Heart left ventricle (tissue), 16 donors: ENCODE measurements at regions of chr6 and their contacts with region 1.

Region 1: GRCh38 chr6:36302227-36302976 is 32.5 kb downstream of the PNPLA1 start:
- DNase-seq: peak; percentile 75 to 89 (median 85)
- ATAC-seq: peak; percentile 61 to 92 (median 88)
- H3K4me3 ChIP-seq: no peak overlapping the region
- H3K27ac ChIP-seq: no peak overlapping the region
- H3K4me1 ChIP-seq: peaks cover 0 to 5% (median 0%) of the 10 kb centered on the region in 12 donors
- H3K27me3 ChIP-seq: peaks cover 0 to 21% (median 0%) of the 10 kb centered on the region in 9 donors
- CTCF ChIP-seq: peak; percentile 80 to 95 (median 90)
- POLR2A ChIP-seq: no peak

Region 2: DNA sequence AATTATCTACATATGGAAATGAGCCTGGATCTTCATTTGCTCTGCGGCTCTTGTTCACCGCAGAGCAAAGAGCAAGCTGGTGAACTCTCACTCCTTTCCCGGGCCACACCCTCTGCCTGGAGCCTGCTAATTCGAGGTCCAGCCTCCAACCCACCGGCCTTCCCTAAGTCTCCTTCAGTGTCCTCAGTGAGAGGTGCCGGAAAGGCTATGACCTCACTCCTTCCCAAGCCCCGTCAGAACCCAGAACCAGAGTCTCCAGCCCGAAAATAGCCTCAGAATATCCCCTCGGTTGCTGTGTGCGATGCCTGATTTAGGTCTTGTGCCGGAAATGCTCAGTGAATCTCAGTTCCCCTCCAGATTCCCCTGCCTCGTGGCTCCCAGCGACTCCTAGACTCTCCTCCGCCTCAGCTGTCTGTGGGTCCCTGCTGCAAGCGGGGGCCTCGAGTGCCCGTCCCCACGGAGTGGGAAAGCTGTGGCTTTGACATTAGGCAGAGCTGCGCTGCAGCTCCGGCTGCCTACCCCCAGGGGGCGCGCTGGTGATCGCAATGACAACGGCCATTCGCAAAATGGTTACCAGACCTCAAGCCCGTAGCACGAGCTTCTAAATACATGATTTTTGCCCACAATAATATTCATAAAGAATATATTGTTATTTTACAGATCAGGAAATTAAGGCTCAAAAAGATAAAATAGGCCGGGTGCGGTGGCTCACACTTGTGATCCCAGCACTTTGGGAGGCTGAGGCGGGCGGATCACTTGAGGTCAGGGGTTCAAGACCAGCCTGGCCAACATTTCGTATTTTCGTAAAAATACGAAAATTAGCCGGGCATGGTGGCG is 38.4 kb after region 1 on chr6:
- intact Hi-C with region 1: loop called in 1 of 10 experiments (anchors 5 kb)
- DNase-seq: peak; percentile 64 to 92 (median 77)
- ATAC-seq: peak; percentile 44 to 83 (median 80)
- H3K4me3 ChIP-seq: peak overlapping the region in 7 of 12 donors; percentile 3 to 41 (median 24)
- H3K27ac ChIP-seq: peak overlapping the region in 1 of 12 donors; percentile 10
- H3K4me1 ChIP-seq: peaks cover 0 to 12% (median 5%) of the 10 kb centered on the region in 12 donors
- H3K27me3 ChIP-seq: peaks cover 0 to 20% (median 7%) of the 10 kb centered on the region in 9 donors
- CTCF ChIP-seq: peak; percentile 90 to 98 (median 97)
- POLR2A ChIP-seq: no peak

Region 3: GRCh38 chr6:37819177-37819823 is 1516.9 kb after region 1 on chr6 and contains the start of gene ZFAND3:
- intact Hi-C with region 1: no loop called
- DNase-seq: peak; percentile 98
- ATAC-seq: peak; percentile 95 to 97 (median 96)
- H3K4me3 ChIP-seq: peak within 1 kb of the TSS; percentile 59 to 96 (median 86)
- H3K27ac ChIP-seq: peak within 1 kb of the TSS; percentile 84 to 100 (median 98)
- H3K4me1 ChIP-seq: peaks cover 7 to 50% (median 38%) of the 10 kb centered on the region in 12 donors
- H3K27me3 ChIP-seq: no peaks in the 10 kb centered on the region
- CTCF ChIP-seq: no peak
- POLR2A ChIP-seq: peak in 1 of 2 donors; percentile 30
- total RNA-seq, gene ZFAND3: 36.0 to 114 (median 100) TPM